SK-N-SH (cell line): ENCODE measurements at regions of chr1 and their contacts with region 1.

Region 1: DNA sequence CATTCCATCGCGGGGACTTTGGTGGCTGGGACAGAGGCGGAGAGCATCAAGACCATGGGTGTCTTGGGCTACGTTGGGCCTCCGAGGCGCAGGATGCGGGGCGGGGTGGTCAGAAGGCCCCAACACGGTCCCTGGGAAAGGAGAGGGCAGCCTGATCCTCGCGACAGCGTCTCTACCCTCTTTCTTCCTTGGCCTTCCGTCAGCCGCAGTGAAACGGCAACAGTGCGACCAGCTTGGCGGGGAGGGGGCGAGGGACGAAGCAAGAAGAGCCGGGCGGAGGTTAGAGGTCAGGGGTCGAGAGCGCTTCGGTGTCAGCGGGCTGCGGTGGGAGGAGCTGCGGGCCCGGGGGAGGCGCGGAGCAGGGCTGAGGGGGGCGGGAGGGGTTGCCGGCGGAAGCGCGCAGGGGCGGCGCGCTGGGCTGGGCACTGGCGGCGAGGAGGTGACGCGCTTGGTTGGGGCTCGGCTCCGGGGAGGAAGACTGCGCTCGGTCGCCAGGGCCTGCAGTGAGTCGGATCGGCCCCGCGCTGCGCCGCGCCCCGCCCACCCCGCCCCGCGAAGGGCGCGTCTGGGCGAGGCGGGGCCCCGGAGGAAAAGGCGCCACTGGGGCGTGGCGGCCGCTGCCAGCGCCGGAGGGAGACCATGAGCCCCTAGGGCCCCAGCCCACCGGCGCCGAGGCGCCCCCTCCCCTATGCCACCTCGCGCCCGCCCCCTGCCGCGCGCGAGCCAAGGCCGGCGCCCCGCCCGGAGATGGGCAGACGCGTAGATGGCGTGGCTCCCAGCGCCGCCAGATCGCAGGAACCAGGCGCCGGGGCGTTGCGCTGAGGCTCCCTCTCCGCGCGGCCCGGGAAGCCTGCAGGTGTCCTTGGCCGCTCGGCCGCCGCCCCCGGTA is at the start of gene KCNC4:
- DNase-seq: peak; percentile 88
- H3K4me3 ChIP-seq: peak within 1 kb of the TSS; percentile 54
- H3K27ac ChIP-seq: no peak within 1 kb of the TSS; a peak in 1 of 4 replicates
- H3K4me1 ChIP-seq: peaks cover 0 to 57% of the 10 kb centered on the region in 2 experiments; a peak in 2 of 4 replicates
- H3K27me3 ChIP-seq: peaks cover 23% of the 10 kb centered on the region
- CTCF ChIP-seq: no peak
- EP300 ChIP-seq: no peak
- RAD21 ChIP-seq: no peak
- polyA plus RNA-seq, gene KCNC4: 0.37 and 0.51 TPM in 2 replicates

Region 2: DNA sequence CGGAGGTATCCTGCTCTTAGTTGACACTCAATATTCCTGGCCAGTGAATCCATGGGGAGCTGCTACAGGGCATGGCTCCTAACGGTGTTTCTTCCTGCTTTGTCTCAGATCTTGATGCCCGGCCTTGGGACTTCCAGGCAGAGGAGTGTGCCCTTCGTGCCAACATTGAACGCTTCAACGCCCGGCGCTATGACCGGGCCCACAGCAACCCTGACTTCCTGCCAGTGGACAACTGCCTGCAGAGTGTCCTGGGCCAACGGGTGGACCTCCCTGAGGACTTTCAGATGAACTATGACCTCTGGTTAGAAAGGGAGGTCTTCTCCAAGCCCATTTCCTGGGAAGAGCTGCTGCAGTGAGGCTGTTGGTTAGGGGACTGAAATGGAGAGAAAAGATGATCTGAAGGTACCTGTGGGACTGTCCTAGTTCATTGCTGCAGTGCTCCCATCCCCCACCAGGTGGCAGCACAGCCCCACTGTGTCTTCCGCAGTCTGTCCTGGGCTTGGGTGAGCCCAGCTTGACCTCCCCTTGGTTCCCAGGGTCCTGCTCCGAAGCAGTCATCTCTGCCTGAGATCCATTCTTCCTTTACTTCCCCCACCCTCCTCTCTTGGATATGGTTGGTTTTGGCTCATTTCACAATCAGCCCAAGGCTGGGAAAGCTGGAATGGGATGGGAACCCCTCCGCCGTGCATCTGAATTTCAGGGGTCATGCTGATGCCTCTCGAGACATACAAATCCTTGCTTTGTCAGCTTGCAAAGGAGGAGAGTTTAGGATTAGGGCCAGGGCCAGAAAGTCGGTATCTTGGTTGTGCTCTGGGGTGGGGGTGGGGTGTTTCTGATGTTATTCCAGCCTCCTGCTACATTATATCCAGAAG is 156.2 kb before region 1 on chr1:
- CTCF ChIA-PET with region 1: interaction called, 42 read pairs
- POLR2A ChIA-PET with region 1: no interaction called
- DNase-seq: peak; percentile 71
- H3K4me3 ChIP-seq: no peak overlapping the region; a peak in 1 of 4 replicates
- H3K27ac ChIP-seq: peak overlapping the region in 1 of 2 experiments; percentile 93; a peak in 2 of 4 replicates
- H3K4me1 ChIP-seq: peaks cover 60 to 79% of the 10 kb centered on the region in 2 experiments
- H3K27me3 ChIP-seq: no peaks in the 10 kb centered on the region
- CTCF ChIP-seq: peak; percentile 96
- EP300 ChIP-seq: no peak
- RAD21 ChIP-seq: peak; percentile 98

Region 3: GRCh38 chr1:110068646-110069403 is 141.1 kb before region 1 on chr1:
- CTCF ChIA-PET with region 1: no interaction called
- POLR2A ChIA-PET with region 1: no interaction called
- DNase-seq: no peak
- H3K4me3 ChIP-seq: no peak overlapping the region
- H3K27ac ChIP-seq: no peak overlapping the region
- H3K4me1 ChIP-seq: peaks cover 0 to 25% of the 10 kb centered on the region in 2 experiments; a peak in 2 of 4 replicates
- H3K27me3 ChIP-seq: no peaks in the 10 kb centered on the region; the same call in 1 of the 2 replicates
- CTCF ChIP-seq: no peak
- EP300 ChIP-seq: no peak
- RAD21 ChIP-seq: no peak

Region 4: DNA sequence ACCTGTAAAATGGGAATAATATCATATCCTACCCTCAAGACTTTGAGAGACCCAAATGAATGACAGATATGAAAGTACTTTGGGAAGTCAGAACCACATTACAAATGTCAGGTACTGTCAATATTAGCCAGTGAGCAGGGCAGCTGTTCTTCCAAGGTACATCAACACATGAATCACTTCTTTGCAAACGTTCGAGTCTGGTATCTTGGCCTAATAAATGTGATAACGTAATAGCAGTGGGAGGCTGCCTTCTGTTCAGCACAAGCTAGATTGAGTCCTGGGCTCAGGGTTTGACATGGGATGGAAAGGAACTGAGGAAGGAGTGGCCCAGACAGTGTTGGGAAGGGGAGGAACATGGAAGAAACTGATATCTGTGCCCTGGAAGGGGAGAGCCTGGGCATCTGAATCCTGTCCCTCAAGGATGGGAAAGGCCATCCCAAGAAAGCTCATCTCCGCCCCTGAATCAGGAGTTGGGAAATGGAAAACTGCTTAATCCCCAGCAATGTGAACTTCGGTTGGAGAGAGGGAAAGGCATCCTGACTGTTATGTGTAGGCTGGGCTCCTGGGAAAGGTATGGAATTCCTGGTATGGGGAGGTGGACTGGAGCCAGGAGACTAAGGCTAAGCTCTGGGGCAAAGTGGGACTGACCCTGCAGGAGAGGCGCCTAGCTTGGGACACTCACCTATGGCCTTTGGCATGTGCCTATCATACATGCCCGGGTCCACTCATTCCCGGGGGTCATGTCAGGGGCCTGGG is 14.5 kb after region 1 on chr1:
- CTCF ChIA-PET with region 1: interaction called, 13 read pairs
- POLR2A ChIA-PET with region 1: no interaction called
- DNase-seq: no peak
- H3K4me3 ChIP-seq: no peak overlapping the region
- H3K27ac ChIP-seq: no peak overlapping the region
- H3K4me1 ChIP-seq: peaks cover 0 to 8% of the 10 kb centered on the region in 2 experiments; a peak in 1 of 4 replicates
- H3K27me3 ChIP-seq: no peaks in the 10 kb centered on the region
- CTCF ChIP-seq: no peak
- EP300 ChIP-seq: no peak
- RAD21 ChIP-seq: no peak

Region 5: GRCh38 chr1:110243574-110243973 is 33.6 kb after region 1 on chr1:
- CTCF ChIA-PET with region 1: interaction called, 19 read pairs
- POLR2A ChIA-PET with region 1: no interaction called
- DNase-seq: no peak
- H3K4me3 ChIP-seq: no peak overlapping the region
- H3K27ac ChIP-seq: no peak overlapping the region
- H3K4me1 ChIP-seq: peaks cover 0 to 15% of the 10 kb centered on the region in 2 experiments; a peak in 1 of 4 replicates
- H3K27me3 ChIP-seq: no peaks in the 10 kb centered on the region
- CTCF ChIP-seq: no peak
- EP300 ChIP-seq: no peak
- RAD21 ChIP-seq: no peak

Region 6: GRCh38 chr1:110281363-110282290 is 71.7 kb after region 1 on chr1:
- CTCF ChIA-PET with region 1: interaction called, 27 read pairs
- POLR2A ChIA-PET with region 1: no interaction called
- DNase-seq: peak; percentile 47
- H3K4me3 ChIP-seq: no peak overlapping the region
- H3K27ac ChIP-seq: no peak overlapping the region; a peak in 1 of 4 replicates
- H3K4me1 ChIP-seq: peaks cover 0 to 15% of the 10 kb centered on the region in 2 experiments; a peak in 1 of 4 replicates
- H3K27me3 ChIP-seq: no peaks in the 10 kb centered on the region
- CTCF ChIP-seq: no peak
- EP300 ChIP-seq: peak in 1 of 2 experiments; percentile 20; a peak in 1 of 4 replicates
- RAD21 ChIP-seq: no peak

Region 7: DNA sequence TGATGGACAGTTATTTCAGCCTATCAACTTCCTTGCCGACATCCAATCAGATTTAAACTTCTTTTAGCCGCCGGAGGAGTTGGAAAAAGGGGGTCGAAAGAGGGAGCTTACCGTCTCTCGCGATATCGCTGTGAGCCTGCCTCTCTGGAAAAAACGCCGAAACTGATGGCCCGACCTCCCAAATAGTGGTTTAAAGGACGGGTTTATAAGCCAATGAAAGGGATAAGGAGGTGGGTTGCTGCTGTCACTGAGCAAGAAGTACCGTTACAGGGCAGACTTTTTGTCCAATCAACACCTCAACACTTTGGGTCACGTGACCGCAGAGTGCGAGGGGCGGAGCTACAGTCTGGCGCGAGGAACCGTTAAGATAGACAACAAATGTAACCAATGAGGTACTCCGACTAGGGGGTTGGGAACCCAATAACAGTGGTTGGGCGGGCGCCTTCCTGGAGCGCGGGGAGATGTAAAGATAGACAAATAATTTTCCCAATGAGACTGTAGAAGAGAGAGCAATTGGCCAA is 129.0 kb after region 1 on chr1 and contains the start of gene RBM15:
- CTCF ChIA-PET with region 1: interaction called, 36 read pairs
- POLR2A ChIA-PET with region 1: interaction called, 3 read pairs
- DNase-seq: peak; percentile 94
- H3K4me3 ChIP-seq: peak within 1 kb of the TSS; percentile 94 to 99
- H3K27ac ChIP-seq: peak within 1 kb of the TSS; percentile 98 to 99
- H3K4me1 ChIP-seq: peaks cover 29 to 44% of the 10 kb centered on the region in 2 experiments
- H3K27me3 ChIP-seq: no peaks in the 10 kb centered on the region
- CTCF ChIP-seq: no peak
- EP300 ChIP-seq: no peak; a peak in 1 of 4 replicates
- RAD21 ChIP-seq: no peak
- polyA plus RNA-seq, gene RBM15: 3.8 and 4.7 TPM in 2 replicates